HEK293 (cell line): ENCODE measurements at regions of chr6 and their contacts with region 1.

Region 1: GRCh38 chr6:159693128-159693893 is at the start of gene SOD2:
- H3K4me3 ChIP-seq: peak within 1 kb of the TSS; percentile 85
- H3K27ac ChIP-seq: peak within 1 kb of the TSS; percentile 89
- H3K4me1 ChIP-seq: no peaks in the 10 kb centered on the region; the same call in 1 of the 2 replicates
- CTCF ChIP-seq: peak; percentile 12; the same call in 1 of the 2 replicates

Region 2: DNA sequence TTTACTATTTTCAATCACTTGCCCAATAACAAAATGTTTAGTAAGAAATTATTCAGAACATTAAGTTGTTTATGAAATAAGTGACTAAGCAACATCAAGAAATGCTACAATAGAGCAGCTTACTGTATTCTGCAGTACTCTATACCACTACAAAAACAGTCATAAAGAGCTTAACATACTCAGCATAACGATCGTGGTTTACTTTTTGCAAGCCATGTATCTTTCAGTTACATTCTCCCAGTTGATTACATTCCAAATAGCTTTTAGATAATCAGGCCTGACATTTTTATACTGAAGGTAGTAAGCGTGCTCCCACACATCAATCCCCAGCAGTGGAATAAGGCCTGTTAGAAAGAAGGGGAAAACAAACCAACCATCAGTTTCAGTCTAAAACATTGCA is 11.0 kb before region 1 on chr6:
- CTCF ChIA-PET with region 1: interaction called, 12 read pairs
- POLR2A ChIA-PET with region 1: interaction called, 5 read pairs
- H3K4me3 ChIP-seq: no peak overlapping the region
- H3K27ac ChIP-seq: no peak overlapping the region
- H3K4me1 ChIP-seq: no peaks in the 10 kb centered on the region
- CTCF ChIP-seq: no peak

Region 3: DNA sequence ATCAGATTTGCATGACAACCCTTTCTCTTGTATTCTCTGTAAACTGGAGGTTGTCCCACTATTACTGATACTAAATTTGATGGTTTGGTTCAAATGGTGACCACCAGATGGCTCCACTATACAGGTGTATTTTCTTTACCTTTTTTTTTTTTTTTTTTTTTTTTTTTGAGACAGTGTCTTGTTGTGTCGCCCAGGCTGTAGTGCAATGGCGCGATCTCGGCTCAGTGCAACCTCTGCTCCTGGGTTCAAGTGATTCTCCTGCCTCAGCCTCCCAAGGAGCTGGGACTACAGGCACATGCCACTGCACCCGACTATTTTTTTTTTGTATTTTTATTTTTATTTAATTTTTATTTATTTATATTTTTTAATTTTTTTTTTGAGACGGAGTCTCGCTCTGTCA is 27.4 kb after region 1 on chr6:
- CTCF ChIA-PET with region 1: interaction called, 11 read pairs
- POLR2A ChIA-PET with region 1: interaction called, 4 read pairs
- H3K4me3 ChIP-seq: no peak overlapping the region
- H3K27ac ChIP-seq: no peak overlapping the region
- H3K4me1 ChIP-seq: 0 out of 2 replicates have a peak, but pooled peaks cover under 1% of the 10 kb centered on the region
- CTCF ChIP-seq: peak; percentile 33; the same call in 1 of the 2 replicates

Region 4: GRCh38 chr6:159726918-159727716 is 33.8 kb after region 1 on chr6 and contains the start of gene WTAP:
- CTCF ChIA-PET with region 1: interaction called, 12 read pairs
- POLR2A ChIA-PET with region 1: interaction called, 67 read pairs
- H3K4me3 ChIP-seq: peak within 1 kb of the TSS; percentile 91
- H3K27ac ChIP-seq: peak within 1 kb of the TSS; percentile 99
- H3K4me1 ChIP-seq: peaks cover 7% of the 10 kb centered on the region; the same call in 1 of the 2 replicates
- CTCF ChIP-seq: peak; percentile 59; the same call in 1 of the 2 replicates

Region 5: DNA sequence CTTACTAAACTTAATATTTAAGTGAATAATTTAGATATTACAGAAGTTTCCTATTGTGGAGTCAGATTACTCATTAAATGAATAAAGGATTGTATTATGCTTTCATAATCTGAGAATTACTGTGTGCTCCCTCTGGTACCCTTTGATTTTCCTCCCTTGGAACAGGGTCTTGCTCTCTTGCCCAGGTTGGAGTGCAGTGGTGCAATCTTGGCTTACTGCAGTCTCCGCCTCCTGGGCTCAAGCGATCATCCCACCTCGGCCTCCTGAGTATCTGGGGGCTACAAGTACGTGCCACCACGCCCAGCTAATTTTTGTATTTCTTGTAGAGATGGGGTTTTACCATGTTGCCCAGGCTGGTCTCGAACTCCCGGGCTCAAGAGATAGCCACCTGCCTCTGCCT is 43.6 kb after region 1 on chr6:
- CTCF ChIA-PET with region 1: interaction called, 12 read pairs
- POLR2A ChIA-PET with region 1: interaction called, 4 read pairs
- H3K4me3 ChIP-seq: no peak overlapping the region
- H3K27ac ChIP-seq: no peak overlapping the region
- H3K4me1 ChIP-seq: peaks cover 5% of the 10 kb centered on the region; the same call in 1 of the 2 replicates
- CTCF ChIP-seq: no peak

Region 6: DNA sequence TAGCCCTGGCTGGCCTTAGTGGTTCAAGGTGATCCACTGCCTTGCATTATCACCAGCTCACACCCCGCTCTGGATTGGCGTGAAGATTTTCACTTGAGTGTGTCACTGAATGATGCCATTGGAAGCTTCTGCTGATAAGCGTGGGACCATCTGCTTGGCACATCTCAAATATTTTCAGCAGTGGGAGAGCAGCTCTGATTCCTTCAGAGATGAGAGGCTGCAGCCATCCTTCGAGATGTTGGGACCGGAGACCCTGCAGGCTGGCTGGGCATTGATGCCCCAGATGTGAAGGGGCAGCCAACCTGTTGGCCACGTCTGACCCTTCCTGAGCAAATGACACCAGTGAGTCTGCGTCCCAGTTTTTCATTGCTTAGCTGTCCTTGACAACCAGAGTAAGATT is 197.5 kb after region 1 on chr6 and contains the start of gene MAS1:
- CTCF ChIA-PET with region 1: no interaction called
- POLR2A ChIA-PET with region 1: no interaction called
- H3K4me3 ChIP-seq: no peak within 1 kb of the TSS
- H3K27ac ChIP-seq: no peak within 1 kb of the TSS
- H3K4me1 ChIP-seq: no peaks in the 10 kb centered on the region
- CTCF ChIP-seq: no peak